Activated CD8-positive, alpha-beta T cell treated with anti-CD3 and anti-CD28 coated beads, Interleukin-2, amount 10 ng/mL, durations not matched to agents 7 days and 5 days (primary cell): ENCODE measurements at regions of chr17 and their contacts with region 1.

Region 1: DNA sequence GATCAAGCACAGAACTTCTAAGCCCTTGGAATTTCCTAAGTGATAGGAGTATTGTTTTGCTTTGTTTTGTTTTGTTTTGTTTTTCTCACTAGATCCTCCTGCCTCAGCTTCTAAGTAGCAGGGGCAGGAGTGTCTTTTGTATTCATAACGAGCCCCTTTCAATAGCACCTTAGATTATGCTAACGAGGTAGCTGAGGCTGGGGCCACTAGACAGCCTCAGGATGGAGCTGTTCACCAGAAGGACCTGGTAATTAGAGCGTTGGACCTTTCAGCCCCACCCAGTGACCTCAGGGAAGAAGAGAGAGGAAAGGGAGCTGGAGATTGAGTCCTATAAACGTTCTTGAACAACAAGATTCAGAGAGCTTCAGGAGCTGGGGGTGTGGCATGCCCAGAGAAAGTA is 43.6 kb downstream of the IKZF3 start:
- DNase-seq: no peak
- ATAC-seq: no peak
- H3K4me3 Mint-ChIP-seq: no peak overlapping the region
- H3K27ac Mint-ChIP-seq: peak overlapping the region; percentile 65
- H3K4me1 Mint-ChIP-seq: peaks cover 52% of the 10 kb centered on the region
- H3K27me3 Mint-ChIP-seq: no peaks in the 10 kb centered on the region

Region 2: DNA sequence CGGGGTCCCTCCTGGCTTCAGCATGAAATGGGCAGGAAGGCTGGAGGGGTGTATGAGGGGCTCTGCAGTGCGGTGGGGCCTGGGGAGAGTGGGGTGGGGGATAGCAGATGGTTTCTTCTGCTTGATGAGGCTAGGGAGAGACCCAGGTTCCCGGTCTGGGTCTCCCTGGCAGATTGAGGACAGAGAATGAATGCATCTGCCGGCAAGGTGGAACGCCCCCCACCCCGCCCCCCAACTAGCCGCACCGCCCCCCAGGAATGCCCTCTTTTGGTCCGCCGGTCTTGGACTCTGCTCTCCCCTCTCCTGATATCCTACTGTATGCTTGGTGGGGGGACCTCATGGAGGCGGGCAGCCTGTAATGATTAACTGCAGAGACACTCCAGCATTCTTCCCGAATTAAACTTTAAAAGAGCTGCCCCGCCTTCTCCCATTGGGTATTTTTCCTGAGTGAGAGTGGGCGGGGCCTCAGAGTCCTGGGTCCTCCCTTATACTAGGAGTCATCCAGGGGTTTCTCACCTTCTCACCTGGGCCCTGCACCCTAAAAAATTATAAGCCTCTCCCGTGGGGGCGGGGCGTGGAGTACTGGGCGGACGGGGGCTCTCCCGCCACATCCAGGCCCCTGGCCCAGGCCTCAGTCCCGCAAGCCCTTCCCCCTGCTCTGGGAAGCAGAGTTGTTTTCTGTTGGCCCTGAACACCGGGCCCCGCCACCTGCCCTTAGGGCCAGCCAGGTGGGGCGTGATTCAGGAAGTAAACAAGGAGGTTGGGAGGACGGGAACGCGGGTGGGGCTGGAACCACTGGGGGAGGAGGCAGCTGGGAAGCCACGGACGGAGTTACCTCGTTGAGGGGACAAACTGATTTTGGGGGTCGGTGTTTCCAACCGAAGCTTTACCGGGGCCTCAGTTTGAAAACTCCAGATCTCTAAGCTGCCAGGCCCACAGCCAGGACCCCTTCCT is 81.3 kb before region 1 on chr17:
- CTCF ChIA-PET with region 1: no interaction called
- POLR2A ChIA-PET with region 1: no interaction called
- DNase-seq: no peak
- ATAC-seq: no peak
- H3K4me3 Mint-ChIP-seq: peak overlapping the region; percentile 61
- H3K27ac Mint-ChIP-seq: peak overlapping the region; percentile 46
- H3K4me1 Mint-ChIP-seq: peaks cover 31% of the 10 kb centered on the region
- H3K27me3 Mint-ChIP-seq: peaks cover 22% of the 10 kb centered on the region

Region 3: GRCh38 chr17:39794249-39794970 is 26.1 kb before region 1 on chr17:
- CTCF ChIA-PET with region 1: interaction called, 12 read pairs
- POLR2A ChIA-PET with region 1: no interaction called
- DNase-seq: peak; percentile 59
- ATAC-seq: peak; percentile 72
- H3K4me3 Mint-ChIP-seq: peak overlapping the region; percentile 30
- H3K27ac Mint-ChIP-seq: peak overlapping the region; percentile 93
- H3K4me1 Mint-ChIP-seq: peaks cover 66% of the 10 kb centered on the region
- H3K27me3 Mint-ChIP-seq: no peaks in the 10 kb centered on the region

Region 4: GRCh38 chr17:39835038-39835786 is 14.7 kb after region 1 on chr17:
- CTCF ChIA-PET with region 1: interaction called, 11 read pairs
- POLR2A ChIA-PET with region 1: interaction called, 3 read pairs
- DNase-seq: no peak
- ATAC-seq: no peak
- H3K4me3 Mint-ChIP-seq: no peak overlapping the region
- H3K27ac Mint-ChIP-seq: no peak overlapping the region
- H3K4me1 Mint-ChIP-seq: peaks cover 3% of the 10 kb centered on the region
- H3K27me3 Mint-ChIP-seq: no peaks in the 10 kb centered on the region